ENCODE measurements at regions of chr18 and their contacts with region 1.

Region 1: DNA sequence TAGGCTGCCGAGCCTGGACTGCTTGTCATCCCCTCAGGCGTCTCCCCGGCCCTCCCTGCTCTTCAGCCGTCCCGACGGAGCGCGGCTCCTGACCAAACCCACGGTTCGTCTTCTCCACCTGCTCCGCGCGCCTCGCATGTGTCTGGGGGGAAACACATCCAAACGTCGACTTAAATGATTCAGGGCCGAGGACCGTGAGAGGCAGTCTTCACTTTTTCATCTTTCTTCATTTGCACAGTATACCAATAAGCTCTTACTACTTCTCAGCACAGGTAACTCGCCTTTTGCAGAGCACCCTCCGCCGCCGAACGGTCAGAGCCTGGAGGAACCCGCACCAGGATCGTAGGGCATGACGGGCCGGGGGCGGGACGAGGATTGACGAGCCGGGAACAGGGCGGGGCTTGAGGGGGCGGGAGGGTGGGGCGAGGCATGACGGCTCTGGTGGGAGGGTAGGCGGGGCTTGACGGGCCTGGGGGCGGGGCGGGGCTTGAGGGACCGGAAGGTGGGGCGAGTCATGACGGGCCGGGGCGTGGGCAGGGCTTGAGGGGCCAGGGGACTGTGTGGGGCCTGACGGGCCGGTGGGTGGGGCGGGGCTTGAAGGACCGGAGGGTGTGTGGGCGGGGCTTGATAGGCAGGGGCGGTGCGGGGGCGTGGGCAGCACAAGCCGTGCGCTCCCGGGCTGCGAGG is at the start of gene SEH1L:
- DNase-seq: peak; percentile 99 to 100
- ATAC-seq: peak; percentile 95 to 99 (median 97)
- H3K4me3 ChIP-seq: peak within 1 kb of the TSS; percentile 56 to 81 (median 71)
- H3K27ac ChIP-seq: peak within 1 kb of the TSS; percentile 92 to 100 (median 97)
- H3K4me1 ChIP-seq: peaks cover 0 to 53% (median 23%) of the 10 kb centered on the region in 9 donors
- H3K27me3 ChIP-seq: no peaks in the 10 kb centered on the region
- CTCF ChIP-seq: no peak
- total RNA-seq, gene SEH1L: 15.0 to 24.6 (median 17.7) TPM

Region 2: GRCh38 chr18:12391618-12392165 is 555.8 kb before region 1 on chr18:
- intact Hi-C with region 1: loop called in 1 of 10 experiments (anchors 10 kb)
- DNase-seq: peak; percentile 29 to 58
- ATAC-seq: peak; percentile 77 to 95 (median 93)
- H3K4me3 ChIP-seq: no peak overlapping the region
- H3K27ac ChIP-seq: no peak overlapping the region
- H3K4me1 ChIP-seq: peaks cover 0 to 3% (median 0%) of the 10 kb centered on the region in 9 donors
- H3K27me3 ChIP-seq: no peaks in the 10 kb centered on the region
- CTCF ChIP-seq: peak; percentile 78 to 95 (median 91)

Region 3: DNA sequence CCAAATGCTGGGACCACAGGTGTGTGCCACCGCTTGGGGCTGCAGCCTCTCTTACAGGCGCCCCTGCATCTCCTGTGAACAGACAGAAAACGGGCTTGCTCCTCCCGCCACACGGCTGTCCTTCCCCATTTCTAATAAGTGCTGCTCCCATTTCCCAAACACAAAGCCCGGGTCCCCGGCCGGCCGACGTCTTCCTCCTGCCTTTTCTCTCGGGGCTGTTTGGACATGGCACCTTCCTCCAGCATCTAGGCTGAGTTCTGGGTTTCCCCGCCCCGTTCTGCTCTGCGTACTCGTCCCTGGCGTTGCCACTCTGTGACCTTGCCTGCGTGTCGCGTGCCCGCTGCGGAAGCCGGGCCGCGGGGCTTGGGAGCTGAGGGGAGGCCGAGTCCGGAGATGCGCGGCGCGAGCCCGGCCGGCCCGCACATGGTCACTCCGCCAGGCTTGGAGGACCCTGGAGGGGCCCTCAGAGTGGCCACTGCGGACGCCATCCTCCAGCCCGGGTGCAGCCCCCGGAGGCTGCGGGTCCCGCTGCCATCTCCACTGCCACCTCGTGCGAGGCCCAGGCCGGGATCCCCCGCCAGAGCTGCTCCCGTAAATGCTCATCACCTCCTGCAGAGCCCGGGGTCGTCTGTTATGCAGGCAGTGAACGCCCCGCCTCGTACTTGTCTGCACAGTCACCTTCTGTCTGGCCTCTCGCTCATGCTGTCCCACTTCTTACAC is 513.5 kb before region 1 on chr18:
- intact Hi-C with region 1: no loop called
- DNase-seq: no peak
- ATAC-seq: peak in 1 of 8 donors; percentile 8
- H3K4me3 ChIP-seq: no peak overlapping the region
- H3K27ac ChIP-seq: no peak overlapping the region
- H3K4me1 ChIP-seq: no peaks in the 10 kb centered on the region
- H3K27me3 ChIP-seq: no peaks in the 10 kb centered on the region
- CTCF ChIP-seq: no peak

Region 4: GRCh38 chr18:12990967-12991838 is 43.7 kb after region 1 on chr18 and contains the start of gene CEP192:
- intact Hi-C with region 1: loop called in 4 of 10 experiments (anchors 2 to 5 kb)
- DNase-seq: peak; percentile 97 to 98
- ATAC-seq: peak; percentile 98 to 100 (median 99)
- H3K4me3 ChIP-seq: peak within 1 kb of the TSS; percentile 49 to 93 (median 78)
- H3K27ac ChIP-seq: peak within 1 kb of the TSS; percentile 54 to 92 (median 87)
- H3K4me1 ChIP-seq: peaks cover 6 to 35% (median 24%) of the 10 kb centered on the region in 9 donors
- H3K27me3 ChIP-seq: no peaks in the 10 kb centered on the region
- CTCF ChIP-seq: peak in 3 of 9 donors; percentile 9 to 13 (median 13)
- total RNA-seq, gene CEP192: 18.3 to 35.6 (median 32.4) TPM

Measured in heart right ventricle (tissue), 16 donors.